ENCODE measurements at regions of chr12 and their contacts with region 1.

Region 1: DNA sequence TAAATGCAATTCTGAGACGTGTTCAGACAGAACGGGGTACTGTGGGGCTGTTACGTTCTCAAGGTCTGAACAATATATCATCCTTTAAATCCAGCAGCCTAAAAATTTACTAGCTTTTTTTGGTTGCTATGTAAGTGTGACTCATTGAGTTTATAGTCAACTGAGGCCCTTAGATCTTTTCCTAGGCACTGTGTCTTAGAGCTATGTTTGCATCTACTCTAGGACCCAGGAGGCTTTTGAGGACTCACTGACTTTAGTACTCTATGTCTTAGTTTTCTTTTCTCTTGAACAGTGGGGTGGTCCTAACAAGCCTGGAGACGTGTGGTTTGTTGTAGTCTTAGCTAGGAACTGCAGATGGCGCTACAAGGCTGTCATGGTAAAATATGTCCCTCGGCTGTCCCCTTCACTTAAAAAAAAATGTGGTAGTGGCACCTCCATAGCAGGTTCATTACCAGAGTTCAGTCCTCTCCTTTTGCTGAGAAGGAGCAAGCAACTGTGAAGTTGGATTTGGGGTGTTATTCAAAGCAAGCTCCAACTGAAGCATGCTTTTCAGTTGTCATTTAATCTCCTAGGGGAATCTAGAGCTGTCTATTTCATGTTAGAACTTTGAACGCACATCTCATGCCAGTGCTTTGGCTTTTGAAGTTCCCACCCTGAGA is 8.7 kb upstream of the SPATS2 start:
- DNase-seq: peak; percentile 79
- ATAC-seq: peak; percentile 90
- H3K4me3 Mint-ChIP-seq: no peak overlapping the region
- H3K27ac Mint-ChIP-seq: no peak overlapping the region
- H3K4me1 Mint-ChIP-seq: peaks cover 8% of the 10 kb centered on the region
- H3K27me3 Mint-ChIP-seq: peaks cover 37% of the 10 kb centered on the region

Region 2: DNA sequence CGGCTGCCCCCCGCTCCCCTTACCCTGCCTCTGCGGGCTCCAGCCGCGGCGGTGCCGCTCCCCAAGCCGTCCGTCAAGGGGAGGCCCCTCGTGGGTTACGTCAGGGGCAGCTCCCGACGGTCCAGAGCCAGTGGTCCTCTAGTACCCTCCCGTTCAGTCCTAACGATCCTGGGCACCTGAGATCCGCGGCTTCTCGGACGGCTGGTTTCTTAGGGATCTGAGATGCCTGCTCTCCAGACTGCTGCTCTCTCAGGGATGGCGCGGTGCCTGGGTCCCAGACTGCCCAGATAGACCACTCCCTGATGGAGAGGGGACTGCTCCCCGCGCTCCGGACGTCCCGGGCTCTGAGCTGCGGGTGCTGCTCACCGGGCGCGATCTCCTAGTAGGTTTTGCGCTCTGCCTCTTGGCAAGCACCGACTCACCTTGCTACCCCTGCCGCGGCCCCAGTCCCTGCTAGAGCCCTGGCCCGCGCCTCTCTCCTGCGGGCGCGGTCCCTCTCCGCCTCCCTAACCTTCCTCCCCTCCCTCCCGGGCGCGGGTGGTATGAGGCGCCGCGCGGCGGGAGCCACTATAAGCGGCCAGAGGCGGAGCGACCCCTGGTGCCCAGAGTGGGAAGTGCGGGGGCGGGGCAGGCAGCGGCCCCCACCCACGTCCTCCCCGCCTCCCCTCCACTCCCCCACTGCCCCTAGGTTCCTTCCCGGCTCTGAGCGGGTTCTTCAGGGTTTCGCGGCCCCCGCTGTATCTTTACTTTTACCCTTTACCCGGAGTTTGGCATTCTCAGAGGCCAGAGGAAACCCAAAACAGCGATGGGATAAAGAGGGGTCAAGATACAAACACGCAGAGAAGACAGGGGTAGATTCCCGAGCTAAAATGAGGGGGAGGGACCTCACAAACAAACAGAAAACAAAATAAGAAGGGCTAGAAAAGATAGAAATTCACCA is 21.7 kb before region 1 on chr12 and contains the start of gene C1QL4:
- CTCF ChIA-PET with region 1: interaction called, 36 read pairs
- POLR2A ChIA-PET with region 1: no interaction called
- DNase-seq: peak; percentile 88
- ATAC-seq: peak; percentile 81
- H3K4me3 Mint-ChIP-seq: peak within 1 kb of the TSS; percentile 53
- H3K27ac Mint-ChIP-seq: no peak within 1 kb of the TSS
- H3K4me1 Mint-ChIP-seq: peaks cover 19% of the 10 kb centered on the region
- H3K27me3 Mint-ChIP-seq: peaks cover 78% of the 10 kb centered on the region
- total RNA-seq, gene C1QL4: not detected

Region 3: DNA sequence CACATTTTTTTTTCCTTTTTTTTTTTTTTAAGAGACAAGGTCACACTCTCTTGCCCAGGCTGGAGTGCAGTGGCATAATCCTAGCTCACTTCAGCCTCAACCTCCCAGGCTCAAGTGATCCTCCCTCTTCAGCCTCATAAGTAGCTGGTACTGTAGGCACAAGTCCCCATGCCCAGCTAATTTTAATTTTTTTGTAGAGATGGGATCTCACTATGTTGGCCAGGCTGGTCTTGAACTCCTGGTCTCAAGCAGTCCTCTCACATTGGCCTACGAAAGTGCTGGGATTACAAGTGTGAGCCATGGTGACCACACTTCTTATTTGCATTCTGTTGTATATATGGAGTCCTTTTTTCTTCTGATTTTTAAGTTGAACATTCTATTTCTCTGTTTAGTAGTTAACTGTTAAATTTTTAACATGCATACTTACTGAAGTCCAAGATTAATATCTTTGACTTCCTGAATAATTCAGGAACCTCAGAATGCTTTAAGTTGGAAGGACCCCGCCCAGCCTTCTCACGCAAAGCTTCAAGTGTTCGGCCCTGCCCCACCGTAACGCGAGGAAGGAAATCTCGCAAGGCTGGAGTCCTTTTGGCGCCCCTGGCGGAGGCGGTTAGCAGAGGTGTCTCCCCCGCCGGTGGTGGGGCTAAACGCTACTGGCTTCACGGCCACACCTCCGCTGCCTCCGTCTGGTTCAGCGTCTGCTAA is 30.2 kb after region 1 on chr12:
- CTCF ChIA-PET with region 1: interaction called, 14 read pairs
- POLR2A ChIA-PET with region 1: no interaction called
- DNase-seq: peak; percentile 80
- ATAC-seq: peak; percentile 94
- H3K4me3 Mint-ChIP-seq: no peak overlapping the region
- H3K27ac Mint-ChIP-seq: no peak overlapping the region
- H3K4me1 Mint-ChIP-seq: peaks cover 6% of the 10 kb centered on the region
- H3K27me3 Mint-ChIP-seq: peaks cover 2% of the 10 kb centered on the region

Region 4: DNA sequence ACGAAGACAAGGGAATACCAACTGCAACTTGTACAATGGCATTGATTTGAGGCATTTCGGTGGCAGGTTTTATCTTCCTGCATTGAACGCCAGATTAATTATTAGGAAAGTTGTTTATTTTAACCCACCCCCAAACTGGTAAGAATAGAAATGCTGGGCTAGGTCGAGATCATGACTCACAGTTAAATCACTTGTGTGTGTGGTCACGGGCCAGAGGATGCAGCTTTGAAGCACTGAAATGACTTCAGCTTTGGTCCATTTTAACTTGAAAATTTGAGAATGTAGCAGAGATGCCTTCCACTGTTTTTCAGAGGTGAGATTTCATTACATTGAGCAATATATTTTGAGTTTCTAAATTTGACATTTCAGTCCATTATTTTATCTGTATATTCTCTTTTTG is 156.7 kb after region 1 on chr12:
- CTCF ChIA-PET with region 1: interaction called, 393 read pairs
- POLR2A ChIA-PET with region 1: interaction called, 8 read pairs
- DNase-seq: no peak
- ATAC-seq: no peak
- H3K4me3 Mint-ChIP-seq: no peak overlapping the region
- H3K27ac Mint-ChIP-seq: no peak overlapping the region
- H3K4me1 Mint-ChIP-seq: no peaks in the 10 kb centered on the region
- H3K27me3 Mint-ChIP-seq: no peaks in the 10 kb centered on the region

Region 5: DNA sequence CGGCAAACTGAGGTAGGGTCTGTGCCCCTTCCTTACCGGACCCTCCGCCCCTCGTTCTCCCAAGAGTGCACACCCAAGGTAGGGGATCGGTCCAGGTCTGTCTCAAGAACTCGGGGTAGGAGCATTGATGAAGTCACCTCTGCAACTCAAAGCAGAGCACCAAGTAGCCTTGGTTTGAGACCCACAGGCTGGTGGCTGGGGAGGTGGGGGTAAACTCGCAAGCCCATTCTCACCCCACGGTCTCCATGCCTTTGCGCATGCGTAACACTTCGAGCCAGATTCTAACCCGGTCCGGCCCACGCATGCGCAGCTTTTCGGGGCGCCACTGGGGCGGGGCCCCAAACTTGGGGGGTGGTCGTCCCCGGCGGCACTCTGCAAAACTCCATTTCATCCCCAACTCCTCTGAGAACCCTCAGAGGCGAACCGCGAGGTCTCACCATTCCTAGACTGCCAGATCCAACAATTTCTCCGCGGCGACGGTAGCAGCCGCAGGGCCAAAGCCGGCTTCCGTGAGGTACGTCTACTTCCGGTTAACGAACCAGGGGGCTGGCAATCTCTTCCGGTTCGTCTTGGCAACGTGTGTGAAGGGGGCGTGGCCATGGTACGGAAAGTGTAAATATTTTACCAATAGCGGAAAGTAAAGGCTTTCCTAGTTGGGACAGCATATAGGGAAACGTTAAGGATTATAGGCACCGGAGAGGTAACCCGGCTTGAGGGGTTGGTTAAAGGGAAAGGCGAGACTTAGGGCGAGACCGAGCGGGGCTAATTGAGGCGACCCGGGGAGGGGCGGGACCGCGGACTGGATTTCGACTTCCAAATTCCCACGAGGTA is 209.2 kb after region 1 on chr12 and contains the start of gene MCRS1:
- CTCF ChIA-PET with region 1: interaction called, 11 read pairs
- POLR2A ChIA-PET with region 1: interaction called, 3 read pairs
- DNase-seq: peak; percentile 94
- ATAC-seq: peak; percentile 78
- H3K4me3 Mint-ChIP-seq: peak within 1 kb of the TSS; percentile 94
- H3K27ac Mint-ChIP-seq: peak within 1 kb of the TSS; percentile 98
- H3K4me1 Mint-ChIP-seq: peaks cover 68% of the 10 kb centered on the region
- H3K27me3 Mint-ChIP-seq: no peaks in the 10 kb centered on the region
- total RNA-seq, gene MCRS1: 85.9 to 86.1 TPM

Region 6: DNA sequence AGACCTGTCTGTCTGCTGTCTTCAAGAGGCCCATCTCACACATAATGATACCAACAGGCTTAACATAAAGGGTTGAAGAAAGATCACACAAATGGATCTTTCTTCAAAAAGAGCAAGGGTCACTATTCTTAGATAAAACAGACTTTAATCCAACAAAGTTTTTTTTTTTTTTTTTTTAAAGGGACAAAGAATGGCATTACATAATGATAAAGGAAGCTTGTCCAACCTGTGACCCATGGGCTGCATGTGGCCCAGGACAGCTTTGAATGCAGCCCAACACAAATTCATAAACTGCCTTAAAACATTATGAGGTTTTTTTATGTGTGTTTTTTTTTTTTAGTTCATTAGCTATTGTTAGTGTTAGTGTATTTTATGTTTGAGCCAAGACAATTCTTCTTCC is 253.6 kb after region 1 on chr12:
- CTCF ChIA-PET with region 1: no interaction called
- POLR2A ChIA-PET with region 1: no interaction called
- DNase-seq: no peak
- ATAC-seq: no peak
- H3K4me3 Mint-ChIP-seq: no peak overlapping the region
- H3K27ac Mint-ChIP-seq: no peak overlapping the region
- H3K4me1 Mint-ChIP-seq: peaks cover 7% of the 10 kb centered on the region
- H3K27me3 Mint-ChIP-seq: peaks cover 6% of the 10 kb centered on the region

Region 7: GRCh38 chr12:49789992-49790391 is 431.4 kb after region 1 on chr12:
- CTCF ChIA-PET with region 1: no interaction called
- POLR2A ChIA-PET with region 1: no interaction called
- DNase-seq: no peak
- ATAC-seq: no peak
- H3K4me3 Mint-ChIP-seq: no peak overlapping the region
- H3K27ac Mint-ChIP-seq: no peak overlapping the region
- H3K4me1 Mint-ChIP-seq: peaks cover 2% of the 10 kb centered on the region
- H3K27me3 Mint-ChIP-seq: peaks cover 5% of the 10 kb centered on the region

Measured in activated CD8-positive, alpha-beta T cell treated with anti-CD3 and anti-CD28 coated beads, Interleukin-2, amount 10 ng/mL, durations not matched to agents 7 days and 5 days (primary cell).